CD8-positive, alpha-beta T cell (primary cell): ENCODE measurements at regions of chr7 and their contacts with region 1.

Region 1: DNA sequence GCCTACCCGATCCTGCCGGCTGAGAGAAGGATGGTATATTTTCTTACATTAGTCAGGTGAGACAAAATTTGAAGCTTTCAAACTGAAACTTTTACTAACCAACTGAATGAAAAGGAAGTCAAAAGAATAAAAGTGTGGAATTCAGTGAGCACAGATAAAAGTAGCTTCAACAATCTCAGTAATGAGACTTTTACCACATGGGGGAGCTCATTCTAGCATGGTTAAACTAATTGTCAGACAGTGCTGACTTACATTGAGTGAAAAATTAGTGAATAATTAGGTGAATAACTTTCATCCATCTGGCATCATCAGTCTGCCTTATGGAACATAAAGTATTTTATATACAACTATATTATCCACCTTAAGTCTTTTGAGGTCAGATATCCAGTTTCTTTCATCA is 8.4 kb downstream of the FAM237B start:
- DNase-seq: peak in 2 of 9 experiments; percentile 22 to 27
- ATAC-seq: no peak
- H3K4me3 ChIP-seq: no peak overlapping the region
- H3K4me3 Mint-ChIP-seq: no peak overlapping the region
- H3K27ac ChIP-seq: no peak overlapping the region
- H3K27ac Mint-ChIP-seq: no peak overlapping the region
- H3K4me1 ChIP-seq: no peaks in the 10 kb centered on the region
- H3K4me1 Mint-ChIP-seq: no peaks in the 10 kb centered on the region
- H3K27me3 ChIP-seq: no peaks in the 10 kb centered on the region
- H3K27me3 Mint-ChIP-seq: peaks cover 31% of the 10 kb centered on the region
- CTCF ChIP-seq: peak; percentile 12

Region 2: DNA sequence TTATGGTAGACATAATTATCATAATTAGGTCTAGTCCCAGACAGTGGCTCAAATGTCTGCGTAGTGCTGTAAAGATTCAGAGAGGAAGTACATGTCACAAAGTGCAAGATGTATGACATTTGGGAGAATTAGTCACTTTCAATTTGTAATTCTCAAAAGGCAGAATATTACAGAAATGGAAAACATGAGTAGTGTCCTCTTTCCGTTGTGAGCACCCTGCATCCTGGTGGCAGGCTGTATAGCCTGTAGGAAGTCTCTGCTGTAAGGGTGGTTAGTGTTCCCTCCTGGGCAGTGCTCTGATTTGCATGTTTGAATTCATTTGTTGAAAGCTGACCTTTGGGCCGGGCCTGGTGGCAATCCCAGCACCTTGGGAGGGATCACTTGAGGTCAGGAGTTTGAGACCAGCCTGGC is 300.3 kb after region 1 on chr7:
- CTCF ChIA-PET with region 1: no interaction called
- POLR2A ChIA-PET with region 1: no interaction called
- intact Hi-C with region 1: loop called in 1 of 2 experiments (anchors 10 kb)
- DNase-seq: no peak
- ATAC-seq: no peak
- H3K4me3 ChIP-seq: no peak overlapping the region
- H3K4me3 Mint-ChIP-seq: no peak overlapping the region
- H3K27ac ChIP-seq: no peak overlapping the region
- H3K27ac Mint-ChIP-seq: no peak overlapping the region
- H3K4me1 ChIP-seq: no peaks in the 10 kb centered on the region
- H3K4me1 Mint-ChIP-seq: no peaks in the 10 kb centered on the region
- H3K27me3 ChIP-seq: no peaks in the 10 kb centered on the region
- H3K27me3 Mint-ChIP-seq: peaks cover 6% of the 10 kb centered on the region
- CTCF ChIP-seq: no peak